A673 (cell line): ENCODE measurements at regions of chr13 and their contacts with region 1.

Region 1: GRCh38 chr13:108227651-108228272 is 9.6 kb downstream of the ABHD13 start:
- DNase-seq: peak; percentile 65
- H3K4me3 ChIP-seq: no peak overlapping the region
- H3K27ac ChIP-seq: no peak overlapping the region
- H3K4me1 ChIP-seq: peaks cover 12% of the 10 kb centered on the region
- H3K27me3 ChIP-seq: no peaks in the 10 kb centered on the region
- CTCF ChIP-seq: peak; percentile 81

Region 2: GRCh38 chr13:108269601-108270328 is 42.0 kb after region 1 on chr13 and contains the start of gene TNFSF13B:
- CTCF ChIA-PET with region 1: no interaction called
- POLR2A ChIA-PET with region 1: no interaction called
- intact Hi-C with region 1: loop called (anchors 5 kb)
- DNase-seq: peak; percentile 62
- H3K4me3 ChIP-seq: peak within 1 kb of the TSS; percentile 41
- H3K27ac ChIP-seq: peak within 1 kb of the TSS; percentile 84
- H3K4me1 ChIP-seq: peaks cover 59% of the 10 kb centered on the region
- H3K27me3 ChIP-seq: no peaks in the 10 kb centered on the region
- CTCF ChIP-seq: peak; percentile 34; the same call in 1 of the 2 replicates
- total RNA-seq, gene TNFSF13B: 9.2 and 11.2 TPM in 2 replicates

Region 3: GRCh38 chr13:108305655-108306054 is 77.9 kb after region 1 on chr13:
- CTCF ChIA-PET with region 1: no interaction called
- POLR2A ChIA-PET with region 1: no interaction called
- intact Hi-C with region 1: no loop called
- DNase-seq: no peak
- H3K4me3 ChIP-seq: no peak overlapping the region
- H3K27ac ChIP-seq: no peak overlapping the region
- H3K4me1 ChIP-seq: no peaks in the 10 kb centered on the region
- H3K27me3 ChIP-seq: no peaks in the 10 kb centered on the region
- CTCF ChIP-seq: no peak

Region 4: DNA sequence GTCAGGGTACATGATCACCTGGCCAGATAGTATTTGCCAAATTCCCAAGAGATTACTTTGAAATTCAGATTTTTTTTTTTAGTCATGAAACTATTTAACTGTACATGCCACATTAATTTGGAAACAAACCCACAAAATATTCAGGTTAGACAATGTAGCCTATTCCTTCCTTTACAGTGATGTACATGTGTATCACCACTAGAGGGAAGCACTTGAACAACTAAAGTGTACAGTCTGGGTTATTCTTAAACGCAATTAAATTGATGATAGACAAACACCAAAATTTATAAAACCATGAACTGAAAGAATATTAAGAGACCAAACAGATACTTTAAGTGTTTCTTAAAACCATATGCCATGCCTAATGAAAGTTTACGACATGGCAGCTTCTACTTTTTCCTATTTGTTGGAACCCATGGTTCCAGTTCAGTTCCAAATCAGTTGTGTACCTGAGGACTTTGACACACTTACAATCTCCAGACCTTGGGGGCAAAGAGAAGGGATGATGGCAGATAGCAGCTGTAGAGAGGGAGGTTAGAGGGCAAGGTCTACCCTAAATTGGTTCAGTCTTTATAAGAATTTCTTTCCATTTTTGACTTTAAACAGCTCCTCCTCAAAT is 94.6 kb after region 1 on chr13:
- CTCF ChIA-PET with region 1: no interaction called
- POLR2A ChIA-PET with region 1: no interaction called
- intact Hi-C with region 1: loop called (anchors 5 kb)
- DNase-seq: peak; percentile 62
- H3K4me3 ChIP-seq: no peak overlapping the region
- H3K27ac ChIP-seq: no peak overlapping the region
- H3K4me1 ChIP-seq: peaks cover 13% of the 10 kb centered on the region
- H3K27me3 ChIP-seq: no peaks in the 10 kb centered on the region
- CTCF ChIP-seq: peak; percentile 78

Region 5: DNA sequence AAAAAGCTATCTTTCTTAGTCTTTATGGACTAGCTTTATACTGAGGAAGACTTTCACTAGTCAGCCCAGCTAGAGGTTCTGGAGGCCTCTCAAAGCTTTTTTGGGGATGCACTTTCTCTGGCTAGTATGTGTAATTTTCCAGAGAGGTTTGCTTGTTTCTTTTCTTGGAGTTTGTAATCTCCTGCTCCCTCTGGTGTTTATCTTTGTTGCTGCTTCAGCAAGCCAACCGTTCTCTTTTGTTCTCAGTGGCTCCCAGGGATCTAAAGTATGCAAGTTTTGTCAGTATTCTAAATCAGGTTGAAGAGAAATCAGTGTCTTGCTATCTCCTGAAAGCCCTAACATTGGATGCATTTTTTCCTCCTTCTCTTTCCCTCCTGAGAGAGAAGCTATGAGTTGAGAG is 280.5 kb after region 1 on chr13:
- CTCF ChIA-PET with region 1: no interaction called
- POLR2A ChIA-PET with region 1: no interaction called
- intact Hi-C with region 1: loop called (anchors 5 kb)
- DNase-seq: peak; percentile 45
- H3K4me3 ChIP-seq: no peak overlapping the region
- H3K27ac ChIP-seq: no peak overlapping the region
- H3K4me1 ChIP-seq: no peaks in the 10 kb centered on the region
- H3K27me3 ChIP-seq: no peaks in the 10 kb centered on the region
- CTCF ChIP-seq: peak; percentile 64